ENCODE measurements at regions of chr10 and their contacts with region 1.

Region 1: DNA sequence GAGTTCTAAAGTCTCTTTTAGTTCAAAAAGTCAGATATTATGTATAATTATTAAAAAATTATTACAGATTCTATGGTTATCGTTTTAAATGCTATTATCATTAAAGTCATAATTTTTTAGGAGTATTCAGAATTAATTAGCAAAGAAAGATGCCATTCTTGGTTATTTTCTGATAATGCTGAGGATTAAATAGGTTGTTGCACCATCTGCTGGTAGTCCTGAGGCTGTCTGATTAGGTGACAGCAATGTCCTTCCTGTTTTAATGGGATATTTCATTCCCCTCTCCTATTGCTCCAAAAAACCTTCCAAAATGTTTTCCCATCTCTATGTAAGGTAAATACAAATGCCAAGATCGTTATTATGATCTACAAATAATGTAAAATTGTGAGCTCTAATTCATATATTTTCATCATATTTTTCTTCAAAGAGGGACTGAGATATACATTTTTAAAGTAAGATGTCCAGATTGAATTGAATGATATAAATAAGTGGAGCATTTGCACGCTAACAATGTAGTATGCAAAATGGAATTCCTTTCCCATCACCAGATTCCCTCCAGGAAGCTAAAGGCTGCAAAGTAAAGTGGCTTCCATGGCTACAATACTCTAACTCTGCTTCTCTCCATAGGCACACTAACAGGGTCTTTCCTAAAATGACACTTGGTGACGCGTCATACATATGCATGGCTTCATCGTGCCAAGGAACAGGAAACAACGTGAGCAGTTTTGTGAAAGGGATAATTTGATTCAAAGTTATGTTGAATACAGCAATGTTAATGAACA is 58.8 kb upstream of the AKR1E2 start:
- DNase-seq: no peak
- H3K4me3 ChIP-seq: no peak overlapping the region
- H3K27ac ChIP-seq: peak overlapping the region in 3 of 4 donors; percentile 32 to 62 (median 49)
- H3K4me1 ChIP-seq: peaks cover 7 to 53% (median 9%) of the 10 kb centered on the region in 3 donors
- H3K27me3 ChIP-seq: no peaks in the 10 kb centered on the region
- CTCF ChIP-seq: peak; percentile 29 to 84 (median 68)
- POLR2A ChIP-seq: no peak

Region 2: DNA sequence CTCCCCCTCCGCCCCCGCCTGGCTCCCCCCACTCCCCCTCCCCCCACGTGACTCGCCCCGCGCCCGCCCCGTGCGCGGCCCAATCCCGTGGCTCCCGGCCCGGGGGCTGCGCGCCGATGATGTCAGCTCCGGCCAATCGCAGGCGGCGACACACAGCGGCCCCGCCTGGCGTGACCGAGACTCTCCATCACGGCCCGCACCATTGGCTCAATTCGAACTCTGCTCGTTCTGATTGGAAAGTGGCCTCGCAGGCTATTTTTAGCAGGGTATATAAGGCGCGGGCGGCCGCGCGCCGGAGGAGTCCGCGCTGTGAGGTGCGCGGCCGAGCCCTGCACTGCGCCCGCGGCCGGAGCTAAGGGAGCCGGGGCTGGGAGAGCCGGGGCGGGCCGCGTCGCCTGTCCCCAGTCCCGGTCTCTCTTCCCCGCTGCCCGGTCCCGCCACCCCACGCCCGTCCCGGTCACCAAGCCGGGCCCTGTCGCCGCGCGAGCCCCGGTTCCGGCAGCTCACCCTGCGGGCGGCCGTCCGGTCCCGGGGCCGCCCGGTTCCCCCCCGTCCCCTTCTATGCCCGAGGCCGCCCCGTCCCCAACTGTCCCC is 981.9 kb before region 1 on chr10:
- intact Hi-C with region 1: loop called (anchors 5 kb)
- DNase-seq: peak; percentile 93
- H3K4me3 ChIP-seq: peak overlapping the region; percentile 70 to 99 (median 82)
- H3K27ac ChIP-seq: peak overlapping the region; percentile 99 to 100 (median 100)
- H3K4me1 ChIP-seq: peaks cover 12 to 31% (median 13%) of the 10 kb centered on the region in 3 donors
- H3K27me3 ChIP-seq: no peaks in the 10 kb centered on the region
- CTCF ChIP-seq: peak in 3 of 6 experiments; percentile 10 to 33 (median 20)
- POLR2A ChIP-seq: peak in 3 of 4 donors; percentile 99 to 100 (median 100)

Region 3: GRCh38 chr10:4532467-4532866 is 234.8 kb before region 1 on chr10:
- intact Hi-C with region 1: loop called (anchors 10 kb)
- DNase-seq: no peak
- H3K4me3 ChIP-seq: no peak overlapping the region
- H3K27ac ChIP-seq: peak overlapping the region in 3 of 4 donors; percentile 7 to 32 (median 14)
- H3K4me1 ChIP-seq: peaks cover 0 to 15% (median 4%) of the 10 kb centered on the region in 3 donors
- H3K27me3 ChIP-seq: no peaks in the 10 kb centered on the region
- CTCF ChIP-seq: no peak
- POLR2A ChIP-seq: no peak

Region 4: GRCh38 chr10:4656576-4657182 is 110.5 kb before region 1 on chr10:
- intact Hi-C with region 1: loop called (anchors 10 kb)
- DNase-seq: no peak
- H3K4me3 ChIP-seq: no peak overlapping the region
- H3K27ac ChIP-seq: no peak overlapping the region
- H3K4me1 ChIP-seq: peaks cover 2 to 52% (median 2%) of the 10 kb centered on the region in 3 donors
- H3K27me3 ChIP-seq: no peaks in the 10 kb centered on the region
- CTCF ChIP-seq: peak; percentile 74 to 95 (median 89)
- POLR2A ChIP-seq: no peak

Measured in esophagus squamous epithelium (tissue), 5 donors.